ENCODE measurements at regions of chr18 and their contacts with region 1.

Region 1: DNA sequence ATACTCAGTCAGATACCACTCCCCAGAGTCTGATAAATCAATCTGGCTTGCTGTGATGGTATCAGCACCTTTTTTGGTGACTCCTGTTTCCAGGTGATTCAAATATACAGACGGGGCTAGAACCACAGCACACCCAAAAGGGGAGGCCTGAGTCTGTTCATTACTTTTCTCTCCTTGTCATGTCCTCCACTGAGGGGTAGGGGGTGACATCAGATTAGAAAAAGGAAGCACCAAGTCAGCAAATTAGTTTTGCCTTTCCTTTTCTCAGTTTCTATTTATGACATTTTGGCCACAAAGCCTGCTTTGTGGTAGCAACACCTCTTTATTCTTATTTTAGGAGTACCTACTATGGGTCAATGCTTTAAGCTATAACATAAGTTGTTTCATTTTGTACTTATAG is 127.4 kb downstream of the CCDC102B start:
- DNase-seq: peak in 1 of 2 experiments; percentile 6
- H3K4me3 ChIP-seq: no peak overlapping the region
- H3K4me3 Mint-ChIP-seq: no peak overlapping the region
- H3K27ac Mint-ChIP-seq: no peak overlapping the region
- H3K4me1 ChIP-seq: no peaks in the 10 kb centered on the region
- H3K4me1 Mint-ChIP-seq: no peaks in the 10 kb centered on the region
- H3K27me3 ChIP-seq: no peaks in the 10 kb centered on the region
- H3K27me3 Mint-ChIP-seq: no peaks in the 10 kb centered on the region
- CTCF ChIP-seq: peak; percentile 12 to 51

Region 2: DNA sequence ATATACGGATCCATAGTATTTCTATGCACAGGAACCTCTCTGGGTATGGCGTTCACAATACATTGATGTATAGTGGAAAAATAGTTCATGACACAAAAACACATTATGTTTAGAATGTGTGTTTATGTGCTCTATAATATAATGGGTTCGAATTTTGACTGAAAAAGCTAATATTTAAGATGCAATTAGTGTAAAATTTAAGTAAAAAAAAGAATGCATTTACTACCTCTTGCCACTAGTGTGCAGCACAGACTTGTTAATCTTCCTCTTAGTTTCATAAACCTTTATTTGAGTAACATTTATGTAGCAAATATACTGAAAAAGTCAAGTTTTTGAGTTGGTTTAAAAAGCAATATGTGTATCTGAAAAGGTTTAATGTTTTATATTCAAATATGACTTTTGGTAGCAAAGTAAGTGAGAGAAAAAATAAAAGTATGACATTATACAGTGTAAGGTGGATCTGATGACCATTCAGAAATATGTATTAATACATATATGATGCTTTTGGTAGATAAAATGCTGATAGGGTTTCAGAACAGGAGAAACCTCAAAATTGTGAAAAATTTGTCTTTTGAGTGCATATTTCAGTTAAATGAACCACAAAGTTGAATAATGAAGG is 77.9 kb before region 1 on chr18:
- CTCF ChIA-PET with region 1: no interaction called
- POLR2A ChIA-PET with region 1: no interaction called
- intact Hi-C with region 1: loop called (anchors 2 kb)
- DNase-seq: peak in 1 of 2 experiments; percentile 1
- H3K4me3 ChIP-seq: no peak overlapping the region
- H3K4me3 Mint-ChIP-seq: no peak overlapping the region
- H3K27ac Mint-ChIP-seq: no peak overlapping the region
- H3K4me1 ChIP-seq: no peaks in the 10 kb centered on the region
- H3K4me1 Mint-ChIP-seq: no peaks in the 10 kb centered on the region
- H3K27me3 ChIP-seq: no peaks in the 10 kb centered on the region
- H3K27me3 Mint-ChIP-seq: no peaks in the 10 kb centered on the region
- CTCF ChIP-seq: peak in 1 of 2 experiments; percentile 43

Region 3: GRCh38 chr18:69002233-69002632 is 77.0 kb after region 1 on chr18:
- CTCF ChIA-PET with region 1: no interaction called
- POLR2A ChIA-PET with region 1: no interaction called
- intact Hi-C with region 1: loop called (anchors 10 kb)
- DNase-seq: no peak
- H3K4me3 ChIP-seq: no peak overlapping the region
- H3K4me3 Mint-ChIP-seq: no peak overlapping the region
- H3K27ac Mint-ChIP-seq: no peak overlapping the region
- H3K4me1 ChIP-seq: no peaks in the 10 kb centered on the region
- H3K4me1 Mint-ChIP-seq: no peaks in the 10 kb centered on the region
- H3K27me3 ChIP-seq: no peaks in the 10 kb centered on the region
- H3K27me3 Mint-ChIP-seq: no peaks in the 10 kb centered on the region
- CTCF ChIP-seq: no peak

Region 4: DNA sequence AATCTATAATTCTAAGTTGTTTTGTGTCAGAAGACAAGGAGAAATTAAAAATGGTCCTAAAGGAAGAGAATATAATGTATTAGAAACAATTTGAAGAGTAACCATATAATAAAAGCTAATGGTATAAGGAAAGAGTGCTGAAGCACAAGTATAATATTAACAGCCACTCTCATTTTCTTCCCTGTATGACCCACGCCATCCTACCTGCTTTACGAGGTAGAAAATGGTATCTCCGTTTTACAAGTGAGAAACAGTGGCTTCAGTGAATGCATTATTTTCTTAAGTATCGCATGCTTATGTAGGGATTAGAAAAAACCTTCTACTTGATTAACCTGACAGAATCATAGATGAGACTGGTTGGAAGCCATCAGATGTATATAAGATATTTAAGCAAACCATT is 138.8 kb after region 1 on chr18:
- CTCF ChIA-PET with region 1: no interaction called
- POLR2A ChIA-PET with region 1: no interaction called
- intact Hi-C with region 1: no loop called
- DNase-seq: no peak
- H3K4me3 ChIP-seq: no peak overlapping the region
- H3K4me3 Mint-ChIP-seq: no peak overlapping the region
- H3K27ac Mint-ChIP-seq: no peak overlapping the region
- H3K4me1 ChIP-seq: no peaks in the 10 kb centered on the region
- H3K4me1 Mint-ChIP-seq: no peaks in the 10 kb centered on the region
- H3K27me3 ChIP-seq: no peaks in the 10 kb centered on the region
- H3K27me3 Mint-ChIP-seq: no peaks in the 10 kb centered on the region
- CTCF ChIP-seq: no peak

Region 5: DNA sequence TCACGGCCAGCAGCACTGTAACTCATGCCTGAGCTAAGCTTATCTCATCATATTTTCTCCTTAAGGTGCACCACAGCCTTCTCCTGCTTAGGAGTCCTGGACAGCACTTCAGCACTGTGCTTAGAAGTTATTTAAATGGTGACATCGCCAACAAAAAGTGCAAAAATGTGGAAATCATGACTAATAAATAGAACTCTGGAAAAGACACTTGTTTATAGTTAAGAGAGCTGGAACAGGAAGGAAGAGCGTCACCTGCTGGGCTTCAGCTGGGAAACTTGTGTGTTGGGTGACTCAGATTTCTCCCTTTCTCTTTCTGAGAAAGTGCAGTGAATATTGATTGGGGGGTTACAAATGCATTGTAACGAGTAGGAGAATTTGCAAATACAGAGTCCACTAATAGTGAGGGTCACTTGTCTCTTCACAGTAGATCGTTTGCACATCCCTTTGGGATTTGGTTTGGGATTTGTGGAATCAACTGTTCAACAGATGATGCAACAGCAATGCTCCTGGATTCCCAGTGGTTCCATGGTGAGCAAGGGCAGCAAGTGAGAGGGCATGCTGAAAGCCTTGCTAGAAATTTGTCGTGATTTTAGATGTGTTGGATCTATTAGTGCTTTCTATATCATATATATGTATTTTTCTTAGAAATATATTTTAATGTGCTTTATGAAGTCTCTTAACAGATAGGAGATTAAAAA is 559.6 kb after region 1 on chr18:
- CTCF ChIA-PET with region 1: no interaction called
- POLR2A ChIA-PET with region 1: no interaction called
- intact Hi-C with region 1: loop called (anchors 10 kb)
- DNase-seq: peak in 1 of 2 experiments; percentile 0
- H3K4me3 ChIP-seq: no peak overlapping the region
- H3K4me3 Mint-ChIP-seq: no peak overlapping the region
- H3K27ac Mint-ChIP-seq: no peak overlapping the region
- H3K4me1 ChIP-seq: no peaks in the 10 kb centered on the region
- H3K4me1 Mint-ChIP-seq: no peaks in the 10 kb centered on the region
- H3K27me3 ChIP-seq: no peaks in the 10 kb centered on the region
- H3K27me3 Mint-ChIP-seq: no peaks in the 10 kb centered on the region
- CTCF ChIP-seq: no peak

Region 6: DNA sequence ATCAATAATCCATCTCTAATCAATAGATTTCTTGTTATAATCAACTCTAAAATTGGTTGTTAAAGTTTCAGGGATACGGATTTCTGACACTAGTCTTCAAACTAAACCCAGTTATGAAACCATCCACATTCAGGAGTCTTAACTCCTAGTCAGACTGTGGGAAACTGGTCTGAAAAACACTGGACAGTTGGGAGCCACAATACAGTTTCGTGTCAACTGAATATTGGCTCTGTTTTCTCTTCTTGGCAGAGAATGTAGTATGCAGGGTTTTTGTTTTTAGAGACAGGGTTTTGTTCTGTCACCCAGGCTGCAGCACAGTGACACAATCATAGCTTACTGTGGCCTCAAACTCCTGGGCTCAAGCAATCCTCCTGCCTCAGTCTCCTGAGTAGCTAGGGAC is 1157.2 kb after region 1 on chr18:
- CTCF ChIA-PET with region 1: no interaction called
- POLR2A ChIA-PET with region 1: no interaction called
- intact Hi-C with region 1: loop called (anchors 5 kb)
- DNase-seq: no peak
- H3K4me3 ChIP-seq: no peak overlapping the region
- H3K4me3 Mint-ChIP-seq: no peak overlapping the region
- H3K27ac Mint-ChIP-seq: no peak overlapping the region
- H3K4me1 ChIP-seq: no peaks in the 10 kb centered on the region
- H3K4me1 Mint-ChIP-seq: no peaks in the 10 kb centered on the region
- H3K27me3 ChIP-seq: no peaks in the 10 kb centered on the region
- H3K27me3 Mint-ChIP-seq: no peaks in the 10 kb centered on the region
- CTCF ChIP-seq: no peak

Measured in Caco-2 (cell line).